H1 (cell line): ENCODE measurements at regions of chr1 and their contacts with region 1.

Region 1: DNA sequence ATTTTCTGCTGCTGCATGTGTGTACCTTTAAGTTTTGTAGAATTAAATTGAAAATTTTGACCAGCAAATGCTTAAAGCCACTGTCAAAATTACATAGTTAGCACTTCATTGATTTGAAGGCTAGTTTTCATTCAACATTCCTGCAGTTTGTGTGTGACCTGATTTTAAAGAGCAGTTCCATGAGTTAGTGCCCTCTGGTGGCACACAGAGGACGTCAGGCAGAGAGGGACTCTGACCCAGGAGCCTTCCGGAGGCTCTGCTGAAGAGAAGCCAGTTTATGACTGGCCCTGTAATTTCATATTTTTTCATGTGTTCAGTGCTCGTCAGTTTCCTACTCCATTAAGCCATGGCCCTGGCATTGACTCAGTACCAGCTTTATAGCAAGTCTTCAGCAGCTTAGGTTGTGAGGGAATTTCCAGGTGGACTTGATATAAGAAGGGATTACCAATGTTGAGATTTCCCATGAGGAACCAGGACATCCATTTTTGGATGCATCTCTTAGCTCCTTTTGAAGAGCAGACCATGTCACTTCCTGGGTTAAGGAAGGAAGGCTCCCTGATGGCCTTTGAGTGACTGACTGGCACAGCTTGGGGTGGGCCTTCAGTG is 104.7 kb downstream of the CAMTA1 start:
- DNase-seq: no peak
- H3K4me3 ChIP-seq: no peak overlapping the region
- H3K27ac ChIP-seq: no peak overlapping the region
- H3K4me1 ChIP-seq: no peaks in the 10 kb centered on the region
- H3K27me3 ChIP-seq: no peaks in the 10 kb centered on the region
- CTCF ChIP-seq: peak; percentile 73 to 82 (median 81)
- EP300 ChIP-seq: no peak
- POLR2A ChIP-seq: no peak
- RAD21 ChIP-seq: peak; percentile 63 to 81

Region 2: DNA sequence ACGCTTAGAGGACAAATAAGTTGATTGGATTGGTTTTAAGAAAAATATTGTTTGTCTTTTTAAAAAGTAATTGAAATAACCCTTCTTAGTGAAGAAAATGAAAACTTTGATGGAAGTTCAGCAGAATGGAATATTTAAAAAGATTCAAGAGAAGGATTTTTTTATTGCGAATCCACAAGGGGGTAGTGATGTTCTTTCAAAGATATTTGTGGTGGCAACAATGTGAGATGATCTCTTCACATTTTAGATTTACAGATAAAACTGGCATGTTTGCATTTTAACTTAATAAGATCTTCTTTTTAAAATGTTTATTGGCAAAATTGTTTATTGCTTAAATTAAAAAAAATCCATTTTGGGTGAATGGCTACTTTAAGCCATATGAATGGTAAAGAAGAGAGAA is 95.8 kb before region 1 on chr1:
- CTCF ChIA-PET with region 1: interaction called, 33 read pairs
- POLR2A ChIA-PET with region 1: no interaction called
- DNase-seq: no peak
- H3K4me3 ChIP-seq: no peak overlapping the region
- H3K27ac ChIP-seq: no peak overlapping the region
- H3K4me1 ChIP-seq: no peaks in the 10 kb centered on the region; a peak in 1 of 7 replicates
- H3K27me3 ChIP-seq: no peaks in the 10 kb centered on the region
- CTCF ChIP-seq: peak in 2 of 3 experiments; percentile 8 to 25; a peak in 2 of 4 replicates
- EP300 ChIP-seq: no peak
- POLR2A ChIP-seq: no peak
- RAD21 ChIP-seq: peak; percentile 48 to 65

Region 3: GRCh38 chr1:6868660-6869380 is 21.2 kb before region 1 on chr1:
- CTCF ChIA-PET with region 1: interaction called, 24 read pairs
- POLR2A ChIA-PET with region 1: interaction called, 3 read pairs
- DNase-seq: no peak
- H3K4me3 ChIP-seq: no peak overlapping the region
- H3K27ac ChIP-seq: no peak overlapping the region
- H3K4me1 ChIP-seq: peaks cover 2 to 18% (median 14%) of the 10 kb centered on the region in 4 experiments; a peak in 6 of 7 replicates
- H3K27me3 ChIP-seq: no peaks in the 10 kb centered on the region
- CTCF ChIP-seq: no peak
- EP300 ChIP-seq: no peak
- POLR2A ChIP-seq: no peak
- RAD21 ChIP-seq: no peak

Region 4: DNA sequence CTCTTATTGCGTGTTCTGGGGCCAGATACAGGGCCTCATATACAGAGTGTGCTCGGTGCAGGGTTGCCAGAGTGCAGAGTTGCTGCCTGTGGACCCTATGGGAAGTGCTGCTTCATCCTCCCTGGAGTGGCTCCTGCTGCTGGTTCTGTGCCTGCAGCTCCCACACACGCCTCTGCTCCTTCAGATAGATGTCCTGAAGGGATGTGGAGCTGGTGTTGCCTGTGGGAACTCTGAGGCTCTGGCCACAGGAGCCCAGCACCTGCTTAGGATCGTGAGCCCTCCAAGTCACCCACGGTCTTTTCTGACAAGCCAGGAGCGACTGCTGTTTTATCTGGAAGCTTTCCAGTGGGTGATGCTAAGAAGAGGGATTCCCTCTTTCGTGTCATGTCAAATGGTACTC is 15.8 kb after region 1 on chr1:
- CTCF ChIA-PET with region 1: interaction called, 11 read pairs
- POLR2A ChIA-PET with region 1: interaction called, 3 read pairs
- DNase-seq: no peak
- H3K4me3 ChIP-seq: no peak overlapping the region
- H3K27ac ChIP-seq: no peak overlapping the region
- H3K4me1 ChIP-seq: peaks cover 0 to 12% (median 7%) of the 10 kb centered on the region in 4 experiments; a peak in 5 of 7 replicates
- H3K27me3 ChIP-seq: no peaks in the 10 kb centered on the region
- CTCF ChIP-seq: no peak
- EP300 ChIP-seq: no peak
- POLR2A ChIP-seq: no peak
- RAD21 ChIP-seq: no peak

Region 5: DNA sequence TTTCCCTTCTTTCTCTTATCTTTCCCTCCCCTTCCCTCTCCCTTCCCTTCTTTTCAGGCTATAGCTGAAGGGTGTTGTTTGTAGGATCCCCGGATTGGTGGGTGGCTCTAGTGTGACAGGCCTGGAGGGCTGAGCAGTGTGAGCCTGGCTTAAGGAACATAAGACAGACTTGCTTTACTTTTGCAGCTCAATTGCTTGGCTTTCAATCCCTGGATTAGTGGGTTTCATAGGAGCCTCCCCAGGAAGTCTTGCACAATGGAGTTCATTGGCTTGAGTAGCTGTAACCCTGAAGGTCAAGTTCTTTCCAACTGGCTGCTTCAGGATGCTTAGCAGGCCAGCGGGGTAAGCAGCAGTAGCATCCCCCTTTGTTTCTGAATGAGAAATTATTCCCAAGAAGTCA is 22.0 kb after region 1 on chr1:
- CTCF ChIA-PET with region 1: interaction called, 10 read pairs
- POLR2A ChIA-PET with region 1: no interaction called
- DNase-seq: no peak
- H3K4me3 ChIP-seq: no peak overlapping the region
- H3K27ac ChIP-seq: no peak overlapping the region
- H3K4me1 ChIP-seq: peaks cover 3 to 21% (median 13%) of the 10 kb centered on the region in 4 experiments
- H3K27me3 ChIP-seq: no peaks in the 10 kb centered on the region; a peak in 1 of 7 replicates
- CTCF ChIP-seq: no peak
- EP300 ChIP-seq: no peak
- POLR2A ChIP-seq: no peak
- RAD21 ChIP-seq: no peak

Region 6: DNA sequence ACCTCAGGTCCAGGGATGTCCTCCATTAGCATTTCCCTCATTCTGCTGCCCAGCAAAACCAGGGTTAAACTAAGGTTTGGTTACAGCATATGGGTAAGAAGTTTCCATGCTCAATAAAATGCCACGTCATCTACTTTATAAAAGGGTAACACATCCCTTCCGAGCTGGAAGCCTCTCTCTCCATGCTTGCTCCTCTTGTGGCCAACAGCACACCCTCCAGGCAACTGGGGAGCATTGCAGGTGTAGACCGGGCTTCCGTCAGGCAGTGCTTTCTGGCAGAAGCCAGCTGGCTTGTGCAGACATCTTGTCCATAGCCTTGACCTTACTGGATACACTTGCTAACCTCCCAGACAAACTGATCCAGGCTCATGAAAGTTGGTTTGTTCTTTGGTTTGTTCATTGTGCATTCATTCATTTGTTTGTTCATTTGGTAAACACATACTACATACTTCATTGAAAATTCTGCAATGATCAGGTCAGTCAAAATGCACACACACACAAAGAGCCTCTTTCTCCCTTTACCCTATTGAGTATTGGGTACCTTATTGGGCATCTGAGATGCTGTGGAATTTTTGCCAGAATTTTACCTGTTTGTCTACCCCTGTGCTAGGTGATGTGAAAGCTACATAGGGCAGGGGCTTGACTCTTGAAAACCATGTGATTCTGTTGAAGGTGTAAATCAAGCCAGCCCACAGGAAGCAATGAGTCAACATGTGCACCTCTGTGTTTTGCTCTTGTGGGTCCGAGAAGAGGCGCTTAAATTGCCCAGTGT is 318.1 kb after region 1 on chr1:
- CTCF ChIA-PET with region 1: interaction called, 10 read pairs
- POLR2A ChIA-PET with region 1: no interaction called
- DNase-seq: peak; percentile 59 to 86
- H3K4me3 ChIP-seq: no peak overlapping the region
- H3K27ac ChIP-seq: no peak overlapping the region
- H3K4me1 ChIP-seq: peaks cover 0 to 2% (median 0%) of the 10 kb centered on the region in 4 experiments; a peak in 1 of 7 replicates
- H3K27me3 ChIP-seq: no peaks in the 10 kb centered on the region
- CTCF ChIP-seq: peak; percentile 95 to 99 (median 97)
- EP300 ChIP-seq: no peak
- POLR2A ChIP-seq: no peak
- RAD21 ChIP-seq: peak; percentile 99